Endothelial cell of umbilical vein (primary cell): ENCODE measurements at regions of chr12 and their contacts with region 1.

Region 1: DNA sequence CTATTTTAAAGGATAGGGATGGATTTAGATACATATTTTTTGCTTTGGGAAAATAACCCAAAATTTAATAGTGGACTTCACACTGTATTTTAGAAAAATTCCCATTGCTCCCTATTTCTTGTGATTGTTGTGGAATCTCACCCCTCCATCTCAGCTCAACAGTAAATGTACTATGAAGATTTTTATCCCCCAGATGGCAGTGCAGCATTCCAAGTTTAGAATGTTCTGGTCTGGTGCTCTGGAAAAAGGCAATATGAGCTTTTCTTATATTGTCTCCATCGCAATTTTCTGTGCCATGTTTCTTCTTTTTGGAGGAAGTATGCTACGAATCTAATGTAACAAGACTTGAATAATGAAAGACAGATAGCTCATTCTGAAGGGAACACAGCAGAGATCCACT is 471.7 kb upstream of the SYT1 start:
- DNase-seq: peak; percentile 2
- H3K4me3 ChIP-seq: no peak overlapping the region
- H3K27ac ChIP-seq: no peak overlapping the region
- H3K4me1 ChIP-seq: no peaks in the 10 kb centered on the region
- H3K27me3 ChIP-seq: peaks cover 0 to 8% of the 10 kb centered on the region in 2 experiments
- CTCF ChIP-seq: no peak
- POLR2A ChIP-seq: no peak

Region 2: GRCh38 chr12:78599366-78599765 is 206.4 kb after region 1 on chr12:
- CTCF ChIA-PET with region 1: no interaction called
- POLR2A ChIA-PET with region 1: no interaction called
- dilution Hi-C with region 1: no loop called
- intact Hi-C with region 1: loop called (anchors 10 kb)
- DNase-seq: no peak
- H3K4me3 ChIP-seq: no peak overlapping the region
- H3K27ac ChIP-seq: no peak overlapping the region
- H3K4me1 ChIP-seq: no peaks in the 10 kb centered on the region
- H3K27me3 ChIP-seq: no peaks in the 10 kb centered on the region
- CTCF ChIP-seq: no peak
- POLR2A ChIP-seq: no peak